ENCODE measurements at regions of chr6 and their contacts with region 1.

Region 1: GRCh38 chr6:14241255-14242070 is 123.9 kb downstream of the CD83 start:
- DNase-seq: no peak
- ATAC-seq: no peak
- H3K4me3 Mint-ChIP-seq: peak overlapping the region; percentile 16
- H3K27ac Mint-ChIP-seq: peak overlapping the region; percentile 63
- H3K4me1 Mint-ChIP-seq: peaks cover 37% of the 10 kb centered on the region
- H3K27me3 Mint-ChIP-seq: no peaks in the 10 kb centered on the region
- CTCF ChIP-seq: no peak

Region 2: DNA sequence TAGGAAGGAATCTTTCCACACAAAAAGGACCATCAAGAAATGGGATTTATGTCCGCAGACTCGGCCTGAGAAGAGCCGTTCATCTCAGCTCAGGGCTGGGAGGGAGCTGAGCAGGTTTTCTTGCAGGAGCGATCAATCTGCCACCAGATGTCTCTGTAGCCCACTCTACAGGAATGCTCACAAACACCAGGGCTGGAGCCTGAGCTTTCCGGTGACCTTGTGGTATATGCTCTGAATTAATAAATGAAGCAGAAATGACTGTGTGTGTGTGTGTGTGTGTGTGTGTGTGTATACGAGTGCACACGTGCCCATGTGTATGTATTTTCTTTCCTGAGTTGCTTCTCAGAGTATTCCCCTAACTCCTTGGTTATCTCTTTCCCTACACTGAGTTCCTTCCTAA is 111.9 kb before region 1 on chr6:
- CTCF ChIA-PET with region 1: no interaction called
- POLR2A ChIA-PET with region 1: interaction called, 10 read pairs
- intact Hi-C with region 1: no loop called
- DNase-seq: no peak
- ATAC-seq: peak; percentile 19
- H3K4me3 Mint-ChIP-seq: peak overlapping the region; percentile 79
- H3K27ac Mint-ChIP-seq: peak overlapping the region; percentile 46
- H3K4me1 Mint-ChIP-seq: peaks cover 100% of the 10 kb centered on the region
- H3K27me3 Mint-ChIP-seq: no peaks in the 10 kb centered on the region
- CTCF ChIP-seq: no peak

Region 3: GRCh38 chr6:14423330-14423729 is 181.9 kb after region 1 on chr6:
- CTCF ChIA-PET with region 1: no interaction called
- POLR2A ChIA-PET with region 1: no interaction called
- intact Hi-C with region 1: no loop called
- DNase-seq: no peak
- ATAC-seq: no peak
- H3K4me3 Mint-ChIP-seq: no peak overlapping the region
- H3K27ac Mint-ChIP-seq: no peak overlapping the region
- H3K4me1 Mint-ChIP-seq: peaks cover 21% of the 10 kb centered on the region
- H3K27me3 Mint-ChIP-seq: no peaks in the 10 kb centered on the region
- CTCF ChIP-seq: no peak

Measured in activated B cell treated with CpG ODN at 0.5 μM for 24 hours (primary cell).